ENCODE measurements at regions of chr12 and their contacts with region 1.

Region 1: DNA sequence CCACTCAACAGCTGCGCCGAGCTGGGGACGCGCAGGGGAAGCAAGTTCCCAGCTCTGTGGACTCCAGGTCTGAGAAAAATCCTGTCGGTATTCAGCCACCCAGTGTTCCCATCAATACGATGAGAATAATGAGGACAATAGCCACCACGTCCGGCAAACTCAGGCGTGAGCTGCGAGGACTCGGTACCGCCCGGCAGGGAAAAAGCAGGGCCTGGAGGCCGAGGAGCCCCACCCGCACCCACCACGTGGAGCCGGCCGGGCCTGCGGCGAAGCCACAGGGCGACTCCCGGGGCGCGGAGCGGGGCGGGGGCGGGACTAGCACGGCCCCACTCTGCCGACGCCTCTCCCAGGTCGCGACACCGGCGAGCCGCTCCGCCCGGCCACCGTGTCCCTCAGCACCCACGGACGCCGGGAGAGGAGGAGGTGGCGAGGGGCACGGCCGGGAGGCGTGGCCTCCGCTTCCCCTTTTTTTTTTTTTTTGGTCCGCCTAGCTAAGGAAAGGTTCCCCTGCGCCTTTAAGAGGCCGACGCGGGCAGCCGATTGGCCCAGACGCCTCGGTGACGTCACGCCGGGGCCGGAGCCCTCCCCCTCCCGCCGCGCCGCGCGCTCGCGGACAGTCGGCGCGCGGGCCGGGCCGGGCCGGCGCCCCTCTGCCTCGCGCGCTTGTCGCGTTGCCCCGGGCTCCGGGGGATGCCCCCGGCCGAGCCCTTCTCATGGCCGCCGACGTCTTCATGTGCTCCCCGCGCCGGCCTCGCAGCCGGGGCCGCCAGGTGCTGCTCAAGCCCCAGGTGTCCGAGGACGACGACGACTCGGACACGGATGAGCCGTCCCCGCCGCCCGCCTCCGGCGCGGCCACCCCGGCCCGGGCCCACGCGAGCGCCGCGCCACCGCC is at the start of gene MLXIP:
- DNase-seq: peak; percentile 68 to 94 (median 90)
- ATAC-seq: peak; percentile 72
- H3K4me3 ChIP-seq: peak within 1 kb of the TSS; percentile 68 to 91
- H3K4me3 Mint-ChIP-seq: peak within 1 kb of the TSS; percentile 91
- H3K27ac ChIP-seq: peak within 1 kb of the TSS; percentile 53 to 82
- H3K27ac Mint-ChIP-seq: peak within 1 kb of the TSS; percentile 91
- H3K4me1 ChIP-seq: peaks cover 32% of the 10 kb centered on the region
- H3K4me1 Mint-ChIP-seq: peaks cover 43% of the 10 kb centered on the region
- H3K27me3 ChIP-seq: no peaks in the 10 kb centered on the region
- H3K27me3 Mint-ChIP-seq: no peaks in the 10 kb centered on the region
- CTCF ChIP-seq: no peak
- total RNA-seq, gene MLXIP: 117 to 132 TPM

Region 2: DNA sequence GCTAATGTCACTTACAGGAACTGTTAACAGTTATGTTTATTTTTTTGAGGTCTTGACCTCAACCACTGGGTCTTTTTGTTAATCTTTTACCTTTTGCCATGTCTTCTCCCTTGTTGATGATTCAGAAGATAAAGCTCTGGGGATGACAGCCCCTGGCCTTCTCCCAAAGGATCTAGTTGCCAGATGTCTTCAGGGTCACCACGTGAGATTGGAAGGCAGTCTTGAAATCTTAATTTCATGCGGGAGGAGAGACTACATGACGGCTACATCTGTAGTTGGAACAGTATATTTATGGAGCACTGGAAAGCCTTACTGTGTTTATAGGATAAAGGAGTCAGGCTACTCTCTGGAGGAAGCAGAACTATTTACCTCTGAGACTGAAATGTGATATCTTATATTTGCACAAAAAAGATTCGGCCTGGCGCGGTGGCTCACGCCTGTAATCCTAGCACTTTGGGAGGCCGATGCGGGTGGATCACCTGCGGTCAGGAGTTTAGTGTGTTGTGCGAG is 1385.8 kb before region 1 on chr12:
- CTCF ChIA-PET with region 1: no interaction called
- POLR2A ChIA-PET with region 1: no interaction called
- intact Hi-C with region 1: no loop called
- DNase-seq: no peak
- ATAC-seq: no peak
- H3K4me3 ChIP-seq: no peak overlapping the region
- H3K4me3 Mint-ChIP-seq: no peak overlapping the region
- H3K27ac ChIP-seq: no peak overlapping the region
- H3K27ac Mint-ChIP-seq: peak overlapping the region; percentile 71
- H3K4me1 ChIP-seq: peaks cover 25% of the 10 kb centered on the region
- H3K4me1 Mint-ChIP-seq: peaks cover 57% of the 10 kb centered on the region
- H3K27me3 ChIP-seq: no peaks in the 10 kb centered on the region
- H3K27me3 Mint-ChIP-seq: no peaks in the 10 kb centered on the region
- CTCF ChIP-seq: no peak

Region 3: DNA sequence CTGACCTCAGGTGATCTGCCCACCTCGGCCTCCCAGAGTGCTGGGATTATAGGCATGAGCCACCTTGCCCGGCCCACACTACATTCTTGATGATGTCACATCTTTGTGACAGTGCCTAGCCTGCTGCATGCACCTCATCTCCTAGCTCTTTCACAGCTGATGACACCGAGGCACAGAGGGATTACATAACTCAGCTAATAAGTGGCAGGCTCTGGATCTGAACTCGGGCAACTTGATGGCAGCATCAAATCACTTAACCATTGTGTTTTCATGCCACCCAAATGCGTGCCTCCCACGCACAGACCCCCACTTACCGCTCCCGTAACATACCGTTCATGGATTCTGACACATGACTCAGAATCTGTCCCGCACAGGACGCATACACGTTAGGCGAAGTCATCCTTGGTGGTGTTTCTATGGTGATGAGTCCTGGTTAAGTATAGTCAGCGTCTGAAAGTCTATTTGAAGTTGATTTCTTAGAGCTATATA is 358.4 kb before region 1 on chr12:
- CTCF ChIA-PET with region 1: no interaction called
- POLR2A ChIA-PET with region 1: no interaction called
- intact Hi-C with region 1: no loop called
- DNase-seq: no peak
- ATAC-seq: no peak
- H3K4me3 ChIP-seq: no peak overlapping the region
- H3K4me3 Mint-ChIP-seq: no peak overlapping the region
- H3K27ac ChIP-seq: no peak overlapping the region
- H3K27ac Mint-ChIP-seq: no peak overlapping the region
- H3K4me1 ChIP-seq: no peaks in the 10 kb centered on the region
- H3K4me1 Mint-ChIP-seq: peaks cover 10% of the 10 kb centered on the region
- H3K27me3 ChIP-seq: no peaks in the 10 kb centered on the region
- H3K27me3 Mint-ChIP-seq: no peaks in the 10 kb centered on the region
- CTCF ChIP-seq: no peak

Region 4: DNA sequence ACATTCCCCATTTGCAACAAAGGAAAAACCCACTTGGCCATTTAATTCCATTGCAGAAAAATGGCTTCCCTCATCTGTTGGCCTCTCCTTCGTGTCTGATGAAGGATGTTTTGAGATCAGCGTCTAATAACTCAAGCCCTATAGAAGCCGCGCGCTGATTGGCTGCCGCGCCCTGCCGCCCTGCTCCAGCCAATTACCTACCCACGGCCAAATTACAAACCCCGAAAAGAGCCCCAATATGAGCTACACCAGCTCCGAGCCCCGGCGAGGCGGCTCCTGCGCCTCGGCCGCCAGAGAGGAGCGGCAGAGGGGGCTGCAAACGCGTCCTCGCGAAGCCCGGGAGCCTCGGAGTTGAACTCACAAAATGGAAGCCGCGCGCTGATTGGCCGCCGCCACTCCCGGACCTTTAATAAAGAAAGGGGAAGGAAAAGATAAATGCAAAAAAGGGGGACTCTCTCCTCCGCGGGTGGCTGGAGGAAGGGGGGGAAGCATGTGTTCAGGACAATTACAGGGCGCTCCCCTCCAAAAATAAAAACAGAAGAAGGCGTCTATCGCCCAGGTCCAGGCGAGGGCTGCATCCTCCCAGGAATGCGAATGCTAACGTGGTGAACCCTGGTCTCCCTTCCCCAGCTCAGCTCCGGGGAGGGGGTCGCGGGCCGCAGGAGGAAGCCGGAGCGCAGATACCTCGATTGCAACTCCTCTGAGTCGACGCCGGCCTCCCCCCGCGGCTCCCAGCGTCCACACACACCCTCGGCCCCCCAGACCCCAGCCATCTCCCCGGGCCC is 275.3 kb before region 1 on chr12:
- CTCF ChIA-PET with region 1: no interaction called
- POLR2A ChIA-PET with region 1: no interaction called
- intact Hi-C with region 1: loop called in 1 of 2 experiments (anchors 5 kb)
- DNase-seq: peak; percentile 79 to 95 (median 88)
- ATAC-seq: peak; percentile 43
- H3K4me3 ChIP-seq: peak overlapping the region; percentile 73 to 82
- H3K4me3 Mint-ChIP-seq: peak overlapping the region; percentile 94
- H3K27ac ChIP-seq: peak overlapping the region; percentile 94 to 98
- H3K27ac Mint-ChIP-seq: peak overlapping the region; percentile 99
- H3K4me1 ChIP-seq: peaks cover 34% of the 10 kb centered on the region
- H3K4me1 Mint-ChIP-seq: peaks cover 28% of the 10 kb centered on the region
- H3K27me3 ChIP-seq: no peaks in the 10 kb centered on the region
- H3K27me3 Mint-ChIP-seq: no peaks in the 10 kb centered on the region
- CTCF ChIP-seq: no peak

Region 5: DNA sequence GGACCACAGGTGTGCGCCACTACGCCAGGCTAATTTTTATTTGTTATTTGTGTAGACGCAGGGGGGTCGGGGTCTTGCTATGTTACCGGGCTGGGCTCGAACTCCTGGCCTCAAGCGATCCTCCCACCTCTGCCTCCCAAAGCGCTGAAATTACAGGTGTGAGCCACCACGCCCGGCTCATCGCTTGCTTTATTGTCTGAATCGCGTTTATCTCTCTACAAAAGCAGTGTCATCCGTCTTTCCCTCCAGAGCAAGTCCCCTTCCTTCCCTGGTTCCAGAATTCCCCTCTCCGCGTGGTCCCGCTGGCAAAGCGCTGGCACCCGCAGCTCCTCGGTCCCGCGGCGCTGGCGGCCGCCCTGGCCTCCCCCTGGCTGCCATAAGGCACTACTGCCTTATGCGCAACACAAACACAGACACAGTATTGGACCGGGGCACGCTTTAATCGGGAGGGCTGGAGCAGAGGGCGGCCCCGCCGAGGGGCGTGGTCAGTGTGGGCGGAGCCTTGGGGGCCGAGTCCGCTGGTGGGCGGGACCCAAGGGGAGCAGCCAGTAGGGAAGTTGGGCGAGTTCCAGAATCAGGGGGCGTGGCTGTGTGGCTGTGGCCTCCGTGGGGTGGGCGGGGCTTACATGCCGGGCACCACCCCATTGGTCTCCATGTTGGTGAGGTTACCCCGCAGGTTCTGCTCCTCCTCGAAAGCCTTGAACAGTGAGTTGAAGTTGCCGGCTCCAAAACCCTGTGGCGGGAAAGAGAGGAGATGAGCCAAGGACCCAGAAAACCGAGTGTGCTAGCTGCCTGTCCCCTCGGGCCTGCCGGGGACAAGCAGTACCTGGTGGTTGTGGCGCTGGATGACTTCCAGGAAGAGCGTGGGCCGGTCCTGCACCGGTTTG is 239.0 kb before region 1 on chr12:
- CTCF ChIA-PET with region 1: no interaction called
- POLR2A ChIA-PET with region 1: no interaction called
- intact Hi-C with region 1: no loop called
- DNase-seq: peak; percentile 99 to 100 (median 100)
- ATAC-seq: peak; percentile 97
- H3K4me3 ChIP-seq: peak overlapping the region; percentile 73 to 95
- H3K4me3 Mint-ChIP-seq: peak overlapping the region; percentile 97
- H3K27ac ChIP-seq: peak overlapping the region; percentile 34 to 54
- H3K27ac Mint-ChIP-seq: peak overlapping the region; percentile 88
- H3K4me1 ChIP-seq: peaks cover 7% of the 10 kb centered on the region
- H3K4me1 Mint-ChIP-seq: peaks cover 13% of the 10 kb centered on the region
- H3K27me3 ChIP-seq: no peaks in the 10 kb centered on the region
- H3K27me3 Mint-ChIP-seq: no peaks in the 10 kb centered on the region
- CTCF ChIP-seq: peak; percentile 27

Region 6: GRCh38 chr12:122048151-122048550 is 30.2 kb before region 1 on chr12:
- CTCF ChIA-PET with region 1: no interaction called
- POLR2A ChIA-PET with region 1: no interaction called
- intact Hi-C with region 1: no loop called
- DNase-seq: no peak
- ATAC-seq: no peak
- H3K4me3 ChIP-seq: no peak overlapping the region
- H3K4me3 Mint-ChIP-seq: no peak overlapping the region
- H3K27ac ChIP-seq: no peak overlapping the region
- H3K27ac Mint-ChIP-seq: no peak overlapping the region
- H3K4me1 ChIP-seq: no peaks in the 10 kb centered on the region
- H3K4me1 Mint-ChIP-seq: no peaks in the 10 kb centered on the region
- H3K27me3 ChIP-seq: no peaks in the 10 kb centered on the region
- H3K27me3 Mint-ChIP-seq: no peaks in the 10 kb centered on the region
- CTCF ChIP-seq: no peak

Region 7: DNA sequence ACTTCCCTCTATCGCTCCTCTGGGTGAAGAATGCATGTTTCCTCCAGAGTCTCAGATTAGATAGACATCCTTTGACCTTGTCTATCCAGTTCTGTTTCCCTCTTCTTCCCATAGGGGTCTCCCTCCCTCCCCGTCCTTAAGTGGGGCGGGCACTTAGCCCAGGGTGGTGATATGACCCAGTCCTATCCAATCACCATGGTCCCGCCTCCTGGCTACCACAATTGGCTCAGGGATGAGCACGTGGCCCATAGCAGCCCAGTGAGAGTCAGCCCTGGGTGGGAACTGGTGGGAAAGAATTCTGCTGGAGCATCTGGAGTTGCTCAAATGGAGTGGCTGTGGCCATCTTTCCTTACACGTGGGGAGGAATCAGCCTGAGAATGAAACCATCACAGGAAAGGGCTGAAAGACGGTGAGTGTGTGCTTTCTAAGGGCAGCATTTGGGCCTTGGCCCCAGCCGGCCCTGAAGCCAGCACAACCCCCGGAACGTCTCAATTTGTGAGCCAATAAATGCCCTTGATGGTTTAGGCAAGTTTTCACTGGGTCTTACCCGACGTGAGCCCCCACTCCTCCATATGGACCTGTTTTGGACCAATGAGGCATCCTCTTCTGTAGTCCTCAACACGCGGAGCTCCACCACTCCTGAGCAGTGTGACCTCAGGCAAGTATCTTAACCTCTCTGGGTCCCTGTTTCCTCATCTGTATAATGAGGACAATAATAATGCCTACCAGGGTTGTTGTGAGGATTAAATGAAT is 14.2 kb before region 1 on chr12:
- CTCF ChIA-PET with region 1: interaction called, 5 read pairs
- POLR2A ChIA-PET with region 1: interaction called, 17 read pairs
- intact Hi-C with region 1: loop called in 1 of 2 experiments (anchors 1 kb)
- DNase-seq: peak in 5 of 9 experiments; percentile 21 to 61 (median 44)
- ATAC-seq: peak; percentile 84
- H3K4me3 ChIP-seq: no peak overlapping the region
- H3K4me3 Mint-ChIP-seq: no peak overlapping the region
- H3K27ac ChIP-seq: no peak overlapping the region
- H3K27ac Mint-ChIP-seq: no peak overlapping the region
- H3K4me1 ChIP-seq: peaks cover 16% of the 10 kb centered on the region
- H3K4me1 Mint-ChIP-seq: peaks cover 28% of the 10 kb centered on the region
- H3K27me3 ChIP-seq: no peaks in the 10 kb centered on the region
- H3K27me3 Mint-ChIP-seq: no peaks in the 10 kb centered on the region
- CTCF ChIP-seq: no peak

Region 8: GRCh38 chr12:122090759-122091515 is 12.6 kb after region 1 on chr12:
- CTCF ChIA-PET with region 1: interaction called, 6 read pairs
- POLR2A ChIA-PET with region 1: interaction called, 34 read pairs
- intact Hi-C with region 1: loop called in 1 of 2 experiments (anchors 1 kb)
- DNase-seq: no peak
- ATAC-seq: no peak
- H3K4me3 ChIP-seq: no peak overlapping the region
- H3K4me3 Mint-ChIP-seq: peak overlapping the region; percentile 65
- H3K27ac ChIP-seq: no peak overlapping the region
- H3K27ac Mint-ChIP-seq: no peak overlapping the region
- H3K4me1 ChIP-seq: peaks cover 93% of the 10 kb centered on the region
- H3K4me1 Mint-ChIP-seq: peaks cover 42% of the 10 kb centered on the region
- H3K27me3 ChIP-seq: no peaks in the 10 kb centered on the region
- H3K27me3 Mint-ChIP-seq: no peaks in the 10 kb centered on the region
- CTCF ChIP-seq: no peak

Region 9: DNA sequence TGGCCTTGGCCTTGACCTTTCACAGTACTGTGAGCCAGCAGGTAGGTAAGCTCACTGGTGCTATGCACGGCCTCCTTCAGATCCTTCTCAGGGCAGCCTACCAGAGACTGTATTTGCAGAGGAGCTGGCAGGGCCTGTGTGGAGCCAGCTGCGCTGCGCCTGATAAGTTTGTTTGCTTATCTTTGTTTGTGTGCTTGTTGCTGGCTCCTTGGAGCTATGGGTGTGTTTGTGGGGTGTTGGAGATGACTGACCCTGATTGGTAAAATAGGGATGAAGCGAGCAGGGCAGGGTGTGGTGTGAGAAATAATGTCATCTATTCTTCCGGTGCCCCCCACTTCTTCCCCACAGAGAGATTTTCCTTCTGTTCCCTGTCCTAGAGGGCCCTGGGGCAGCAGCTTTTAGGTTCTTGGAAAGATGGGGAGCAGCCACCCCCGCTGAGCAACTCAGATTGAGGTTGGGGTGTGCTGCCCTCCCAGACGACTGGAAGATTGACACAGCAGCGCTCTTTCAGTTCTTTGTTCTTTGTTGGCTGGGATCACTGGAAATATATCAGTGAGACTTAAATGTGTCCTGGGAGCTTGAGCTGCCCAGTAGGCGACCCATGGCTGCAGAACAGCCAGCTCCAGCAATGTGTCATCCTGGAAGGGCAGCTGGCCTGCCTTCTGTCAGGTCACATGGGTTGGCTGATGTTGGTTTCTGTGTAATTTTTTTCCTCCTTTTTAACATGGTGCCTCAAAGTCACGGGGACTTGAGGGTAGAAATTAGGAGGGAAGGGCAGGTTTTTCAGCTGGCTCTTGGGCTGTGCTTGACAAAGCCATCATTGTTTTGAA is 19.8 kb after region 1 on chr12:
- CTCF ChIA-PET with region 1: interaction called, 7 read pairs
- POLR2A ChIA-PET with region 1: interaction called, 34 read pairs
- intact Hi-C with region 1: loop called in 1 of 2 experiments (anchors 2 kb)
- DNase-seq: peak in 1 of 9 experiments; percentile 40
- ATAC-seq: peak; percentile 49
- H3K4me3 ChIP-seq: peak overlapping the region in 1 of 2 experiments; percentile 2
- H3K4me3 Mint-ChIP-seq: peak overlapping the region; percentile 70
- H3K27ac ChIP-seq: peak overlapping the region; percentile 11 to 63
- H3K27ac Mint-ChIP-seq: peak overlapping the region; percentile 93
- H3K4me1 ChIP-seq: peaks cover 86% of the 10 kb centered on the region
- H3K4me1 Mint-ChIP-seq: peaks cover 65% of the 10 kb centered on the region
- H3K27me3 ChIP-seq: no peaks in the 10 kb centered on the region
- H3K27me3 Mint-ChIP-seq: no peaks in the 10 kb centered on the region
- CTCF ChIP-seq: no peak

Region 10: GRCh38 chr12:122203301-122204166 is 125.1 kb after region 1 on chr12 and contains the start of gene B3GNT4:
- CTCF ChIA-PET with region 1: no interaction called
- POLR2A ChIA-PET with region 1: no interaction called
- intact Hi-C with region 1: loop called in 1 of 2 experiments (anchors 1 kb)
- DNase-seq: peak in 8 of 9 experiments; percentile 50 to 79 (median 70)
- ATAC-seq: peak; percentile 79
- H3K4me3 ChIP-seq: peak within 1 kb of the TSS; percentile 52 to 61
- H3K4me3 Mint-ChIP-seq: peak within 1 kb of the TSS; percentile 83
- H3K27ac ChIP-seq: no peak within 1 kb of the TSS
- H3K27ac Mint-ChIP-seq: no peak within 1 kb of the TSS
- H3K4me1 ChIP-seq: peaks cover 11% of the 10 kb centered on the region
- H3K4me1 Mint-ChIP-seq: peaks cover 16% of the 10 kb centered on the region
- H3K27me3 ChIP-seq: peaks cover 0 to 4% of the 10 kb centered on the region in 2 experiments
- H3K27me3 Mint-ChIP-seq: peaks cover 5% of the 10 kb centered on the region
- CTCF ChIP-seq: no peak
- total RNA-seq, gene B3GNT4: not detected

Region 11: GRCh38 chr12:122265931-122266771 is 187.8 kb after region 1 on chr12 and contains the start of gene VPS33A:
- CTCF ChIA-PET with region 1: no interaction called
- POLR2A ChIA-PET with region 1: no interaction called
- intact Hi-C with region 1: loop called in 1 of 2 experiments (anchors 5 kb)
- DNase-seq: peak; percentile 82 to 97 (median 92)
- ATAC-seq: peak; percentile 72
- H3K4me3 ChIP-seq: peak within 1 kb of the TSS; percentile 89 to 95
- H3K4me3 Mint-ChIP-seq: peak within 1 kb of the TSS; percentile 97
- H3K27ac ChIP-seq: peak within 1 kb of the TSS; percentile 95 to 96
- H3K27ac Mint-ChIP-seq: peak within 1 kb of the TSS; percentile 100
- H3K4me1 ChIP-seq: peaks cover 9% of the 10 kb centered on the region
- H3K4me1 Mint-ChIP-seq: peaks cover 36% of the 10 kb centered on the region
- H3K27me3 ChIP-seq: no peaks in the 10 kb centered on the region
- H3K27me3 Mint-ChIP-seq: no peaks in the 10 kb centered on the region
- CTCF ChIP-seq: no peak
- total RNA-seq, gene VPS33A: 11.6 to 13.1 TPM